CD4-positive, alpha-beta T cell (primary cell): ENCODE measurements at regions of chr3 and their contacts with region 1.

Region 1: DNA sequence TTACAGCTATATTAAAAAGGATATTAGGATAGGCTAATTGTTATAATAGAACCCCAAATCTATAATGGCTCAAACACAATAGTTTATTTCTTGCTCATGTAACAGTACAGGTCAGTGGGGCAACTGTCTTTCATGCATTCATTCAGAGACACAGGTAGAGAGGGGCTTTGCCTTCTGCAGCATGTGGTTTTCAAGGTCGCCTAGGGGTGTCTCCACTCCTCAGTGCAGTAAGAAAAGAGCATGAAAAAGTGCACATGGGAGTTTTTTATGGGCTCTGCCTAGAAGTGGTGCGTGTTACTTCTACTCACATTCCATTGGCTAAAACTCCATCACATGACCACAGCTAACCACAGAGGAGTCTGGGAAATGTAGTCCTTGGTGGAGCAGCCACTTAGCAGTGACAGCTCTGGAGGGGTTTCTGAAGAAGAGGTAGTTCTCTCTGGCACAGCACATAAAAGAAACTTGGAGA is 1.8 kb downstream of the ZBTB38 start:
- DNase-seq: peak; percentile 20 to 94 (median 42)
- ATAC-seq: peak; percentile 100
- H3K4me3 ChIP-seq: no peak overlapping the region
- H3K4me3 Mint-ChIP-seq: no peak overlapping the region
- H3K27ac ChIP-seq: no peak overlapping the region
- H3K27ac Mint-ChIP-seq: peak overlapping the region; percentile 3
- H3K4me1 ChIP-seq: no peaks in the 10 kb centered on the region
- H3K4me1 Mint-ChIP-seq: peaks cover 8% of the 10 kb centered on the region
- H3K27me3 ChIP-seq: no peaks in the 10 kb centered on the region
- H3K27me3 Mint-ChIP-seq: no peaks in the 10 kb centered on the region
- CTCF ChIP-seq: peak; percentile 53

Region 2: DNA sequence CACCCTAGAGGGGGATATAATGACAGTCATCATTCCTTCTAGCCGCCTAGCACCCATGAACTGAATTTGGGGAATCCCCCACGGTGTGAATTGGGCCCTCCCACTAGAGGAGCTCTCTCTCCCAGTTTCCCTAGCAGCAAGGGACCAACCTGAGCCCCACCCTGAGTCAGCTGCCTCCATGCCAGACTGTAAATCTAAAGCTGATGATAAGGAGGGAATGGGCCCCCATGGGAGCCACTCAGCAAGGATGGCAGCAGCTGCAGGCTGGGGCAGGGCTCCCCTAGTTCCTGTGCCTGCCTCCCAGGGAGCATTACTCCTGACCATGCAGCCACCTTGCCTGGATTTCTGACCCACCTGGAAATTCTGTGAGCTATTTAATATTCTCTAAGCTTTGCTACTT is 195.4 kb before region 1 on chr3:
- CTCF ChIA-PET with region 1: no interaction called
- POLR2A ChIA-PET with region 1: no interaction called
- intact Hi-C with region 1: no loop called
- DNase-seq: no peak
- ATAC-seq: no peak
- H3K4me3 ChIP-seq: no peak overlapping the region
- H3K4me3 Mint-ChIP-seq: no peak overlapping the region
- H3K27ac ChIP-seq: no peak overlapping the region
- H3K27ac Mint-ChIP-seq: no peak overlapping the region
- H3K4me1 ChIP-seq: no peaks in the 10 kb centered on the region
- H3K4me1 Mint-ChIP-seq: no peaks in the 10 kb centered on the region
- H3K27me3 ChIP-seq: no peaks in the 10 kb centered on the region
- H3K27me3 Mint-ChIP-seq: peaks cover 6% of the 10 kb centered on the region
- CTCF ChIP-seq: no peak

Region 3: DNA sequence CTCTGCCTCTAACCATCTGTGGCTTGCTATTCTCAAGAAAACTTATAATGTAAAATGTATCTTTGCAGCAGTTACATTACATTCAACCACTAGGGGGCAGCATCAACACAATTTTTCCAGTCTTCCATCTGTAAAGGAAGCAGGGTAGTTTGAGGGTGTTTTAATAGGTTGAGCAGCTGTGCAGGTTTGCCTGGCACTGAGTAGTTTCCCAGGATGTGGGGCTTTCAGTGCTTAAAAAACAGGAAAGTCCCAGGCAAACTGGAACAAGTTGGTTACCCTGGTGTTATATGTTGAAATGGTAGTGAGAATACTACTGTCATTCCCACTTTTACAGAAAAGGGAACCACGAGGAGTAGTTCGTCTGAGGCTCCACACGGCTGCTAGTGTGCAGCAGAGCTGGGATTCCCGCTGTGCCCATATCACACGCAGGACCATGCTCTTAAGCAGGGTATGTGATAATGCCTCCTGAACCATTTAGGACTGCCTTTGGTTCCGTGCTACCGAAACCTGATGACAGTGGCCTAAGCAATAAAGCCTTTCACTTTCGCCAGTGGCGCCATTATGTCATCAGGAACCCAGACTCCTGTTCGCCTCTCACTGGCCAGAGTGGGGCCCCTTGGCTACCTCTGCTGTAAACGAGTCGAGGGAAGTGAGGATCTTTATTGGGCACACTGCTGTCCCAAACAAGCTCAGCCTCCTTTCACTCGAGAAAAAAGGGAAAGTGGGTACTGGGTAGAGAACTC is 66.4 kb before region 1 on chr3:
- CTCF ChIA-PET with region 1: interaction called, 3 read pairs
- POLR2A ChIA-PET with region 1: interaction called, 6 read pairs
- intact Hi-C with region 1: loop called in 1 of 2 experiments (anchors 1 kb)
- DNase-seq: peak in 11 of 14 experiments; percentile 16 to 89 (median 60)
- ATAC-seq: peak; percentile 43
- H3K4me3 ChIP-seq: no peak overlapping the region
- H3K4me3 Mint-ChIP-seq: no peak overlapping the region
- H3K27ac ChIP-seq: no peak overlapping the region
- H3K27ac Mint-ChIP-seq: no peak overlapping the region
- H3K4me1 ChIP-seq: peaks cover 61% of the 10 kb centered on the region
- H3K4me1 Mint-ChIP-seq: peaks cover 81% of the 10 kb centered on the region
- H3K27me3 ChIP-seq: no peaks in the 10 kb centered on the region
- H3K27me3 Mint-ChIP-seq: no peaks in the 10 kb centered on the region
- CTCF ChIP-seq: peak; percentile 80

Region 4: DNA sequence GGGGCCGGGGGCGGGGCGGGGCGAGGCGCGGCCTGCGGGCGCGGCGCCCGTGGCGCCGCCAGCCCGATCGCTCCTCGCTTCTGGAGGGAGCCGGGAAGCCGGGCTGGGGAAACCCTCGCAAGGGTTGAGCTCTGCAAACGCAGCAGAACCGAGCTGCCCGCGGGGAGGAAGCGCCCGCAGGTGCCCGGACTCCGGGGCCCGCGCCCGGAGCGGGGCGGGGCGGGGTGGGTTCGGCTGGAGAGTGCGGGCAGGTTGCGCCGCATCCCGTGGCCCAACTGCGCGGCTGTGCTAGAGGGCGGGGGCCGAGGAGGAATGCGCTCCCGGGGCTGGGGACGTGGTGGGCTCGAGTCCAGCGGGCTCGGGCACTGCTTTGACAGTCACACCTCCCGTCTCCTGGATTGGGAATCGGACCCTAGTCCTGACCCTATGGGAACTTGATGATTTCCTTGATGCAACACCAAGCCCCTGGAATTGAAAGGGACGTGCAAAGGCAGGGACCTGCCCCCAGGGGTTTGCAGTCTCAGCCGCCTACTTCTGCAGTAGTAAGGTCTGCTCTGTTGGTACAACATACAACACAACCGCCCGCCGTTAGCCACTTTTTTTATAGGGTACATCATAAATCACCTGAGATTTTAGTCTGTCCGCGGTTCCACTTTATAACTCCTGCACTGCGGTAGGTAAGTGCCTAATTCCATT is 32.5 kb after region 1 on chr3:
- CTCF ChIA-PET with region 1: interaction called, 4 read pairs
- POLR2A ChIA-PET with region 1: interaction called, 3 read pairs
- intact Hi-C with region 1: loop called in 1 of 2 experiments (anchors 5 kb)
- DNase-seq: peak; percentile 33 to 67 (median 48)
- ATAC-seq: peak; percentile 69
- H3K4me3 ChIP-seq: peak overlapping the region; percentile 64
- H3K4me3 Mint-ChIP-seq: peak overlapping the region; percentile 98
- H3K27ac ChIP-seq: peak overlapping the region; percentile 42 to 46
- H3K27ac Mint-ChIP-seq: peak overlapping the region; percentile 98
- H3K4me1 ChIP-seq: peaks cover 28% of the 10 kb centered on the region
- H3K4me1 Mint-ChIP-seq: peaks cover 63% of the 10 kb centered on the region
- H3K27me3 ChIP-seq: no peaks in the 10 kb centered on the region
- H3K27me3 Mint-ChIP-seq: no peaks in the 10 kb centered on the region
- CTCF ChIP-seq: no peak

Region 5: DNA sequence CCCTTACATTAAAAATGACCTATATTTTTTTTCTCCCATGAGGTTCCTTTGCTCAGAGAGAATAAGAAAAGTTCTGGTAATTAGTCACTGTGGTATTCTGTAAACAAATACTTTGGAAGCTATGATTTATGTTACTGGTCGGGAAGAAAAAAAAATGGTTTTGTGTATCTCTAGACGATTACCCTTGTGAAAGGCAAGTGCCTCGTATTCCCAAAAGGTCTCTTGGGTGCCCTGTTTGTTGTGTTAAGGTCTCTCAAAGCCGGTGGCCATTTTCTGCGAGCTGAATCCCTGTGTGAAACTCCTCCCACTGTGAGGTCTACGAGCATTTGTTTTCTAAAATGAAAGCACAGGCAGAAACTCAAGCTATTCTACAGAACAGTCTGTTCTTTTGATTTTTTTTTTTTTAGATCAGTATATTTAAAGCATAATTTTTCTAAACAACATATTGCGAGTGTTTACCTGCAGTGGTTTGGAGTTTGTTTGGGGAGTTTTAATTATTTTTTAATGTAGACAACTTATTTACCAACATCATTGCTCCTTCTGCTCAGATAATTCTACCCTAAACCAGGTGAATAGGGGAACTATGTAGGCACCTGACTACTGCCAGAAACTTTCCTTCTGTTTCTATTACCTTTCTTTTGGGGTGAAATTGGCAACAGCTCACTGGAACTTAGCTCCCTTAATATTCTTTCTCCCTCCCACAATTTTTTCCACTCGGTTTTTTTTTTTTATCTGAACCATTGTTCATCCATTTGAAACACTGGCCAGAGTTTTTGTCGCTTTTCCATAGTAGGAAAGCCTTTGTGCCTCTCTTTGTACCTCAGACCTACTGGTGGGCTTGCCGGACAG is 42.2 kb after region 1 on chr3:
- CTCF ChIA-PET with region 1: interaction called, 3 read pairs
- POLR2A ChIA-PET with region 1: no interaction called
- intact Hi-C with region 1: loop called (anchors 1 to 5 kb)
- DNase-seq: peak; percentile 33 to 87 (median 48)
- ATAC-seq: peak; percentile 69
- H3K4me3 ChIP-seq: peak overlapping the region; percentile 31
- H3K4me3 Mint-ChIP-seq: peak overlapping the region; percentile 82
- H3K27ac ChIP-seq: peak overlapping the region; percentile 65 to 87
- H3K27ac Mint-ChIP-seq: peak overlapping the region; percentile 98
- H3K4me1 ChIP-seq: peaks cover 67% of the 10 kb centered on the region
- H3K4me1 Mint-ChIP-seq: peaks cover 80% of the 10 kb centered on the region
- H3K27me3 ChIP-seq: no peaks in the 10 kb centered on the region
- H3K27me3 Mint-ChIP-seq: no peaks in the 10 kb centered on the region
- CTCF ChIP-seq: no peak

Region 6: GRCh38 chr3:141441381-141442364 is 71.6 kb after region 1 on chr3:
- CTCF ChIA-PET with region 1: interaction called, 20 read pairs
- POLR2A ChIA-PET with region 1: no interaction called
- intact Hi-C with region 1: loop called in 1 of 2 experiments (anchors 2 kb)
- DNase-seq: peak; percentile 42 to 86 (median 74)
- ATAC-seq: peak; percentile 97
- H3K4me3 ChIP-seq: no peak overlapping the region
- H3K4me3 Mint-ChIP-seq: peak overlapping the region; percentile 4
- H3K27ac ChIP-seq: no peak overlapping the region
- H3K27ac Mint-ChIP-seq: peak overlapping the region; percentile 68
- H3K4me1 ChIP-seq: peaks cover 9% of the 10 kb centered on the region
- H3K4me1 Mint-ChIP-seq: peaks cover 28% of the 10 kb centered on the region
- H3K27me3 ChIP-seq: no peaks in the 10 kb centered on the region
- H3K27me3 Mint-ChIP-seq: no peaks in the 10 kb centered on the region
- CTCF ChIP-seq: peak; percentile 75

Region 7: DNA sequence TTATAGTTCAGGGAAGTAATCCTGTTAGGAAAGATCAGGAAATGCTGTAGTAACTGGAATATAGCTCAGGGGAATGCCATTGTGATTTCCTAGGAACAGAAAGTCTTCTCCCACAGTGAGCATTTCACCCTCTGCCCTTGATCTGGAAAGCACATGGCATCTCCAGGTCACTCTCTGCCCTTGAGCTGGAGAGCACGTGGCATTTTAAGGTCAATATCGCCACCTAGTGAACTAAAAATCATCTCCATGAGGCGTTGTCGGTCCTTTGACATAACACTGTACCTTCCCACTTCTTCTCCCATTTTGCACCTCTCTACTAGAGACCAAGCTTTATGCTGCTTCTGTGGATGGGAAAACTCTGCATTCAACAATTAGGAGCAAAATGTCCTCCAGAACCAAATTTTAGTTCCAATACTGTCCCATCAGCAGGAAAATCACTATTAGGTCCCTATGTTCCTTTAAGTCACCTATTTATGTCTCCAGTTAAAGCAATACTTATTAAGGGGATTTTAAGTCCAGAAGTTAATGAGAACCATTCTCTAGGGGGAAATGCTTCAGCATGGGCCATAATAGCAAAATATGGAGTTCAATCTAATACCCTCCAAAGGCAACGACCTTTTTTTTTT is 910.0 kb after region 1 on chr3:
- CTCF ChIA-PET with region 1: no interaction called
- POLR2A ChIA-PET with region 1: no interaction called
- intact Hi-C with region 1: no loop called
- DNase-seq: peak in 12 of 14 experiments; percentile 1 to 80 (median 18)
- ATAC-seq: peak; percentile 80
- H3K4me3 ChIP-seq: no peak overlapping the region
- H3K4me3 Mint-ChIP-seq: no peak overlapping the region
- H3K27ac ChIP-seq: no peak overlapping the region
- H3K27ac Mint-ChIP-seq: no peak overlapping the region
- H3K4me1 ChIP-seq: peaks cover 12% of the 10 kb centered on the region
- H3K4me1 Mint-ChIP-seq: no peaks in the 10 kb centered on the region
- H3K27me3 ChIP-seq: no peaks in the 10 kb centered on the region
- H3K27me3 Mint-ChIP-seq: no peaks in the 10 kb centered on the region
- CTCF ChIP-seq: peak; percentile 77